ENCODE measurements at regions of chr12 and their contacts with region 1.

Region 1: DNA sequence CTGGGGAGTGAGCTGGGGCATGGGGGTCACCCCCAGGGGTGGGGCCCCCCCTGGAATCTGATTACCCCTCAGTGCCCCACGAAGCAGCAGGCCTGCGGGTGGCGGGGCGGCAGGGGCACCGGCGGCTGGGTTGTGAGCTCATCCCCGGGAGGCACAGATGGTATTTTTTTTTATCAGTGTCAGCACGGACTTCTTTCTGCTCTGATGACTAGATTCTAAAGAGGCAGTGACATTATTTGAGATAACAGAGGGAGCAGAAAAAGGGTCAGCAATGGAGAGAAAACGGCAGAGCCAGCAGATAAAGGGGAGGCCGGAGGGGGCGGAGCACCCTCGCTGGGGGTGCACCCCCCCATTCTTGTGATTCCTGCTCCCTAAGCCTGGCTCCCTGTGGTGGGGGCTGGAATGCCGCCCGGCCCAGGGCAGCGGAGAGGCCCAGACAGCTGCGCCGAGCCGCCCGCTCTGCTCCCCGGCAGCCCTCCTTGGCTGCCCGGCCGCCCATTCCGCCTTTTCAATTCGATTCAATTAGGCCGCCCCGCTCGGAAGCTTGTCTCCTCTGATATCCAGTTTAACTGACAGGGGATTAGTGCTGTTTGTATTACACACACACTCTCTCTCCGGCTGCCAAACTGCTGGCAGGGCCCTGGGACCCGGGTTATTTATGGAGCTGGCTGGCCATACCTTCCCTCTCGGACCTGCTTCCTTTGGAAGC is 32.9 kb downstream of the MVK start:
- DNase-seq: peak; percentile 89
- H3K4me3 ChIP-seq: no peak overlapping the region
- H3K27ac ChIP-seq: peak overlapping the region in 1 of 2 experiments; percentile 96; a peak in 2 of 4 replicates
- H3K4me1 ChIP-seq: peaks cover 0 to 54% of the 10 kb centered on the region in 2 experiments; a peak in 1 of 4 replicates
- H3K27me3 ChIP-seq: peaks cover 4% of the 10 kb centered on the region; the same call in 1 of the 2 replicates
- CTCF ChIP-seq: no peak
- EP300 ChIP-seq: peak in 1 of 2 experiments; percentile 89; a peak in 2 of 4 replicates
- RAD21 ChIP-seq: peak; percentile 35; the same call in 1 of the 2 replicates

Region 2: GRCh38 chr12:109581856-109582255 is 24.6 kb before region 1 on chr12:
- CTCF ChIA-PET with region 1: no interaction called
- POLR2A ChIA-PET with region 1: no interaction called
- DNase-seq: no peak
- H3K4me3 ChIP-seq: no peak overlapping the region
- H3K27ac ChIP-seq: no peak overlapping the region
- H3K4me1 ChIP-seq: peaks cover 0 to 4% of the 10 kb centered on the region in 2 experiments; a peak in 1 of 4 replicates
- H3K27me3 ChIP-seq: no peaks in the 10 kb centered on the region
- CTCF ChIP-seq: no peak
- EP300 ChIP-seq: no peak
- RAD21 ChIP-seq: no peak

Region 3: DNA sequence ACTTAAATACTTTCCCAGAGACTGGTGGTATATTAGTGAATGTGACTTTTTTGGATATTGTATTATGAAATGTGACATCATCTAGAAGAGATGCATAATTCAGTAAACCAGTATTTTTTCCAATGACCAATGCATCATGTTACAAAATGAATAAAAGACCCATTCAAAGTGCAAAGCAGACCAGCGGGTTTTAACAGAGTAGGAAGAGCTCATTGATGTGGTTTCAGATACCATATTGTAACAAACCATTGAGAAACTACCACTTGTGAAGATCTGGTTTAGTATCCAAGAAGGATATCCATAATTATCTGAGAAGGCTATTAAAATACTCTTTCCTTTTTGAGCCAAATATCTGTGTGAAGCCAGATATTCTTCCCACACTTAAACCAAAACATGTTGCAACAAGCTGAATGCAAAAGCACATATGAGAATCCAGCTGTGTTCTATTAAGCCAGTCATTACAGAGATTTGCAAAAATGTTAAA is 14.8 kb after region 1 on chr12:
- CTCF ChIA-PET with region 1: interaction called, 6 read pairs
- POLR2A ChIA-PET with region 1: interaction called, 20 read pairs
- DNase-seq: no peak
- H3K4me3 ChIP-seq: no peak overlapping the region
- H3K27ac ChIP-seq: peak overlapping the region in 1 of 2 experiments; percentile 93; a peak in 2 of 4 replicates
- H3K4me1 ChIP-seq: peaks cover 0 to 82% of the 10 kb centered on the region in 2 experiments; a peak in 3 of 4 replicates
- H3K27me3 ChIP-seq: peaks cover 23% of the 10 kb centered on the region; the same call in 1 of the 2 replicates
- CTCF ChIP-seq: no peak
- EP300 ChIP-seq: peak in 1 of 2 experiments; percentile 31; a peak in 1 of 4 replicates
- RAD21 ChIP-seq: no peak

Region 4: GRCh38 chr12:109645194-109645593 is 38.7 kb after region 1 on chr12:
- CTCF ChIA-PET with region 1: interaction called, 3 read pairs
- POLR2A ChIA-PET with region 1: interaction called, 15 read pairs
- DNase-seq: peak; percentile 70
- H3K4me3 ChIP-seq: no peak overlapping the region
- H3K27ac ChIP-seq: peak overlapping the region in 1 of 2 experiments; percentile 95; a peak in 2 of 4 replicates
- H3K4me1 ChIP-seq: peaks cover 0 to 55% of the 10 kb centered on the region in 2 experiments; a peak in 2 of 4 replicates
- H3K27me3 ChIP-seq: no peaks in the 10 kb centered on the region; the same call in 1 of the 2 replicates
- CTCF ChIP-seq: no peak
- EP300 ChIP-seq: peak in 1 of 2 experiments; percentile 62; a peak in 1 of 4 replicates
- RAD21 ChIP-seq: peak; percentile 6; the same call in 1 of the 2 replicates

Region 5: GRCh38 chr12:109689426-109689825 is 83.0 kb after region 1 on chr12:
- CTCF ChIA-PET with region 1: no interaction called
- POLR2A ChIA-PET with region 1: no interaction called
- DNase-seq: no peak
- H3K4me3 ChIP-seq: no peak overlapping the region
- H3K27ac ChIP-seq: no peak overlapping the region
- H3K4me1 ChIP-seq: no peaks in the 10 kb centered on the region; a peak in 1 of 4 replicates
- H3K27me3 ChIP-seq: no peaks in the 10 kb centered on the region
- CTCF ChIP-seq: no peak
- EP300 ChIP-seq: no peak
- RAD21 ChIP-seq: no peak

Region 6: DNA sequence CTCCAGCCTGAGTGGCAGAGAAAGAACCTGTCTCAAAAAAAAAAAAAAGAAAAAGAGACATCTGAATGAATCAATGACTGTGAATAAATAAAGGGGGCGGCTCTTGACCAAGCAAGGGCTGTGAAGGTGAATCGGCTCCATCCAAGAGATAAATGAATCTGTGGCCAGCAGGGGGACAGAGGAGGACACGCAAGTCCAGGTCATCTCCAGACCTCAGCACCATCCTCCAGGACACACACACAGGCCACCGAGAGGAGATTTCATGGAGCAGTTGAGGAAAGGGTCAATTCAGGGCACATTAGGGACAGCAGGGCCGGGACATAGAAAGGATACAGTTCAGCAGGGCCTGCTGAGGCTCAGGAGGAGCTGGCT is 205.1 kb after region 1 on chr12:
- CTCF ChIA-PET with region 1: no interaction called
- POLR2A ChIA-PET with region 1: no interaction called
- DNase-seq: no peak
- H3K4me3 ChIP-seq: no peak overlapping the region
- H3K27ac ChIP-seq: no peak overlapping the region
- H3K4me1 ChIP-seq: no peaks in the 10 kb centered on the region
- H3K27me3 ChIP-seq: no peaks in the 10 kb centered on the region
- CTCF ChIP-seq: 0 out of 2 replicates have a peak, but pooled peaks have one; percentile 20
- EP300 ChIP-seq: no peak
- RAD21 ChIP-seq: no peak

Region 7: GRCh38 chr12:110004598-110004997 is 398.1 kb after region 1 on chr12:
- CTCF ChIA-PET with region 1: no interaction called
- POLR2A ChIA-PET with region 1: no interaction called
- DNase-seq: no peak
- H3K4me3 ChIP-seq: no peak overlapping the region
- H3K27ac ChIP-seq: no peak overlapping the region
- H3K4me1 ChIP-seq: peaks cover 8 to 18% of the 10 kb centered on the region in 2 experiments; a peak in 3 of 4 replicates
- H3K27me3 ChIP-seq: no peaks in the 10 kb centered on the region
- CTCF ChIP-seq: no peak
- EP300 ChIP-seq: no peak
- RAD21 ChIP-seq: no peak

Measured in SK-N-SH (cell line).